A549 (cell line): ENCODE measurements at regions of chr15 and their contacts with region 1.

Region 1: DNA sequence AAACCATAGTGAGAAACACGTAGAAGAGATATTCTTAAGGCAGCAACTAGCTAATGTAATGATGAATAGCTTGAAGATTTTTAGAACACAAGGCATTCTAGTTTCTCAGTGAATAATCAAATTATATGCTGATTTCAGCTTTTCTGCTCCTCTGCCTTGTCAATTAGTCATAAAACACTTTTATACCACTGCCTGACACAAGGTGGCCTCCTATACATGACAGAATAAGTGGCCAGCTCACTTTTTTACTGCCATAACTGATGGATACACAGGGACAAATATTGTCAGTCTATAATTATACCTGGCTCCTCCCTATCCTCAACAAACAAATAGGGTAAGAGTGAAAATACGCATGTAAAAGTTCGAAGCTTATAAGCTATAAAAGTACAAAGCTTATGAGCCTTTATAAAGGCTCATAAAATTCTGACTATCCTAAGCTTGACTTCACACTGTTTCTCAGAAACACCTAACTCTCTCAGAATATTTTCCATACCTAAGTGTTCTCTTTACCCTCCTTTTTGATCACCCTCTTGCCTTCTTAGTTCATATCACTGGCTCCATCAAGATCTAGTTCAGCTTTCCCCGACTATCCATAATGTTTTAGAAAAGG is 81.6 kb downstream of the HERC1 start:
- DNase-seq: peak; percentile 64 to 76
- ATAC-seq: peak; percentile 93 to 97
- H3K4me3 ChIP-seq: no peak overlapping the region
- H3K27ac ChIP-seq: no peak overlapping the region
- H3K4me1 ChIP-seq: no peaks in the 10 kb centered on the region
- CTCF ChIP-seq: peak; percentile 93
- EP300 ChIP-seq: no peak
- POLR2A ChIP-seq: no peak
- RAD21 ChIP-seq: peak; percentile 92

Region 2: GRCh38 chr15:63610200-63610841 is 141.9 kb before region 1 on chr15:
- CTCF ChIA-PET with region 1: interaction called, 19 read pairs
- POLR2A ChIA-PET with region 1: no interaction called
- DNase-seq: peak; percentile 85 to 93
- ATAC-seq: peak; percentile 92 to 96
- H3K4me3 ChIP-seq: no peak overlapping the region
- H3K27ac ChIP-seq: peak overlapping the region; percentile 18 to 21; a peak in 3 of 6 replicates
- H3K4me1 ChIP-seq: peaks cover 17% of the 10 kb centered on the region
- CTCF ChIP-seq: peak; percentile 96
- EP300 ChIP-seq: no peak
- POLR2A ChIP-seq: no peak
- RAD21 ChIP-seq: peak; percentile 94 to 95

Region 3: GRCh38 chr15:63763476-63764123 is 11.4 kb after region 1 on chr15:
- CTCF ChIA-PET with region 1: interaction called, 19 read pairs
- POLR2A ChIA-PET with region 1: no interaction called
- DNase-seq: no peak
- ATAC-seq: no peak
- H3K4me3 ChIP-seq: no peak overlapping the region
- H3K27ac ChIP-seq: no peak overlapping the region
- H3K4me1 ChIP-seq: peaks cover 9% of the 10 kb centered on the region; the same call in 1 of the 3 replicates
- CTCF ChIP-seq: no peak
- EP300 ChIP-seq: no peak
- POLR2A ChIP-seq: no peak
- RAD21 ChIP-seq: no peak

Region 4: GRCh38 chr15:63896336-63897115 is 144.3 kb after region 1 on chr15:
- CTCF ChIA-PET with region 1: interaction called, 18 read pairs
- POLR2A ChIA-PET with region 1: no interaction called
- DNase-seq: peak; percentile 50 to 66
- ATAC-seq: peak; percentile 19 to 69; a peak in 3 of 6 replicates
- H3K4me3 ChIP-seq: no peak overlapping the region
- H3K27ac ChIP-seq: peak overlapping the region; percentile 51 to 74
- H3K4me1 ChIP-seq: peaks cover 14% of the 10 kb centered on the region
- CTCF ChIP-seq: no peak
- EP300 ChIP-seq: no peak
- POLR2A ChIP-seq: no peak
- RAD21 ChIP-seq: no peak

Region 5: DNA sequence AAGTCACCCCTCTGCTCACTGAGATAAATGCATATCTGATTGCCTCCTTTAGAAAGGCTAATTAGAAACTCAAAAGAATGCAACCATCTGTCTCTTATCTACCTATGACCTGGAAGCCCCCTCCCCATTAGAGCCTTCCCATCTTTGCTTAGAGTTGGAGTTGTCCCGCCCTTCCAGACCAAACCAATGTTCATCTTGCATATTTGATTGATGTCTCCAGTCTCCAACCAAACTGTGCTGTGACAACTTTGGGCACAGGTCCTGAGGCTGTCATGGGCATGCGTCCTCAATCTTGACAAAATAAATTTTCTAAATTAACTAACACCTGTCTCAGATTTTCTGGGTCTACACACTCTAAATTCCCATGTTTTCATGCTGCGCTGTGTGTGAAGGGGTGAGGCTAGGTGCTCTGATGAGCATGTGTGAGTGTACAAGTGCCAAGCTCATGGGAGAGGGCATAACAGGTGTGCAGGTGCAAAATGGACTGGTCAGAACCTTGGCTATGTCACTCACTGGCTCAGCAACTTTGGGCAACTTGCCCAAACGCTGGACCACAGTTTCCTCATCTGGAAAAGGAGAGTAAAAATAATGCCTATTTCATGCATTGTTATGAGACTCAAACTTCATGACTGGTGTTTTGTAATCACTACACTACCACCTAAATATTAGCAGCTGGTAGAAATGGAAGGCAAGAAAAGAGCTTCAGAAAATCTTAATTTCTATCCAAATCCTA is 286.9 kb after region 1 on chr15:
- CTCF ChIA-PET with region 1: interaction called, 40 read pairs
- POLR2A ChIA-PET with region 1: no interaction called
- DNase-seq: no peak
- ATAC-seq: no peak
- H3K4me3 ChIP-seq: no peak overlapping the region
- H3K27ac ChIP-seq: no peak overlapping the region
- H3K4me1 ChIP-seq: no peaks in the 10 kb centered on the region
- CTCF ChIP-seq: no peak
- EP300 ChIP-seq: no peak
- POLR2A ChIP-seq: no peak
- RAD21 ChIP-seq: no peak

Region 6: GRCh38 chr15:64072812-64073211 is 320.6 kb after region 1 on chr15:
- CTCF ChIA-PET with region 1: interaction called, 139 read pairs
- POLR2A ChIA-PET with region 1: interaction called, 3 read pairs
- DNase-seq: no peak
- ATAC-seq: no peak
- H3K4me3 ChIP-seq: no peak overlapping the region
- H3K27ac ChIP-seq: no peak overlapping the region; a peak in 1 of 6 replicates
- H3K4me1 ChIP-seq: peaks cover 34% of the 10 kb centered on the region
- CTCF ChIP-seq: no peak
- EP300 ChIP-seq: no peak
- POLR2A ChIP-seq: no peak
- RAD21 ChIP-seq: no peak